Esophagus muscularis mucosa (tissue), 4 donors: ENCODE measurements at regions of chr2 and their contacts with region 1.

Region 1: GRCh38 chr2:240513549-240514287 is 44.1 kb downstream of the ANKMY1 start:
- DNase-seq: peak; percentile 95
- H3K4me3 ChIP-seq: no peak overlapping the region
- H3K27ac ChIP-seq: no peak overlapping the region
- H3K4me1 ChIP-seq: peaks cover 0 to 9% (median 2%) of the 10 kb centered on the region in 4 donors
- H3K27me3 ChIP-seq: peaks cover 0 to 12% (median 0%) of the 10 kb centered on the region in 4 donors
- CTCF ChIP-seq: peak; percentile 74 to 85 (median 80)
- EP300 ChIP-seq: no peak
- POLR2A ChIP-seq: no peak

Region 2: GRCh38 chr2:240704651-240705050 is 190.9 kb after region 1 on chr2:
- intact Hi-C with region 1: loop called (anchors 10 kb)
- DNase-seq: no peak
- H3K4me3 ChIP-seq: no peak overlapping the region
- H3K27ac ChIP-seq: no peak overlapping the region
- H3K4me1 ChIP-seq: no peaks in the 10 kb centered on the region
- H3K27me3 ChIP-seq: peaks cover 0 to 68% (median 2%) of the 10 kb centered on the region in 4 donors
- CTCF ChIP-seq: no peak
- EP300 ChIP-seq: no peak
- POLR2A ChIP-seq: no peak

Region 3: DNA sequence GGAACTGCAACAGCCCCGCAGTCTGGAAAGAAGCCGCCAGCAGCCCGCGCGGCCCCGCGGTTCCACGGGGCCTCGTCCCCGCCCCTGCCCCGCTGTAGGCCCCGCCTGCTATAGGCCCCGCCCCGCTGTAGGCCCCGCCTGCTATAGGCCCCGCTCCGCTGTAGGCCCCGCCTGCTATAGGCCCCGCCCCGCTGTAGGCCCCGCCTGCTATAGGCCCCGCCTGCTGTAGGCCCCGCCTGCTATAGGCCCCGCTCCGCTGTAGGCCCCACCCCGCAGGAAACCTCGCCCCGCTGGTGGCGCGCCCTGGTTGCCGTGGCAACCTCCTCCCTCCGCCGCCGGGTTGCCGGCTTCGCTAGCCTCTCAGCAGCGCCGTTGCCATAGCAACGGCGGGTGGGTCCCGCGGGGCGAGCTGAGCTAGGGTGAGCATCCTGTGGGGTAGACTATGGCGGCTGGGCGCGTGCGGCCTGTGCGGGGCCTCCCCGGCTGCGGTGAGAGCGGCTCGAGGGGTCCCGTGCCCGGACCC is 318.5 kb after region 1 on chr2:
- intact Hi-C with region 1: loop called (anchors 10 kb)
- DNase-seq: peak; percentile 94
- H3K4me3 ChIP-seq: peak overlapping the region; percentile 27 to 45 (median 41)
- H3K27ac ChIP-seq: peak overlapping the region in 1 of 4 donors; percentile 22
- H3K4me1 ChIP-seq: peaks cover 10 to 22% (median 17%) of the 10 kb centered on the region in 4 donors
- H3K27me3 ChIP-seq: peaks cover 0 to 23% (median 2%) of the 10 kb centered on the region in 4 donors
- CTCF ChIP-seq: no peak
- EP300 ChIP-seq: no peak
- POLR2A ChIP-seq: no peak